Activated CD4-positive, alpha-beta T cell treated with anti-CD3 and anti-CD28 coated beads for 36 hours (primary cell): ENCODE measurements at regions of chr7 and their contacts with region 1.

Region 1: DNA sequence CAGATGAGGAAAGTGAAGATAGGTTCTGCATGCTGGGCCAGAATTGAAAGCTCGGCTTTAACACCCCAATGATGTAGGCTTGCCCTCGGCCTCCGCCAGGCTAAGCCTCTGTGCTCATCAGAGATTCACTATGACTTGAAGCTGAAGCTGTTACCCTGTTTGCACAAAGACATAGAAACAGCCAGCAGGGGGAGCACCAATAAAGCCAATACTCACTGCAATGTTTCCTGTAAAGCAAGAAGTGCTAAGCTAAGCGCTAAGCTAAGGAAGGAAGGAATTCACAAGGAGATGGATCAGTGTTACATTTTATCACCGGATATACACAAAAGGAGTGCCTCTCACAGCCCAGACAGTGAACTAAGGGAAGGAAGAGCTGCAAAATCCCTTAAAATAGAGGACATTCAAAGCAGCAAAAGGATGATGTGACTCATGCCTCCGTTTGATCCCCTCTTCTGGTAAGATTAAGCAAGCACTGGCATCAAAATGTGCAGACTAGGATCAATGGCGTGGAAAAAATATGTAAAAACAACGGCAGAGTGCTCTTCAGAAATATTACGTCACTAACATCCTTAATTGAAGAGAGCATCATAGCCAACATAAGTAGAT is 153.8 kb downstream of the COBL start:
- DNase-seq: peak; percentile 89
- ATAC-seq: peak; percentile 96
- H3K4me3 Mint-ChIP-seq: no peak overlapping the region
- H3K27ac Mint-ChIP-seq: no peak overlapping the region
- H3K4me1 Mint-ChIP-seq: peaks cover 9% of the 10 kb centered on the region
- H3K27me3 Mint-ChIP-seq: peaks cover 6% of the 10 kb centered on the region

Region 2: DNA sequence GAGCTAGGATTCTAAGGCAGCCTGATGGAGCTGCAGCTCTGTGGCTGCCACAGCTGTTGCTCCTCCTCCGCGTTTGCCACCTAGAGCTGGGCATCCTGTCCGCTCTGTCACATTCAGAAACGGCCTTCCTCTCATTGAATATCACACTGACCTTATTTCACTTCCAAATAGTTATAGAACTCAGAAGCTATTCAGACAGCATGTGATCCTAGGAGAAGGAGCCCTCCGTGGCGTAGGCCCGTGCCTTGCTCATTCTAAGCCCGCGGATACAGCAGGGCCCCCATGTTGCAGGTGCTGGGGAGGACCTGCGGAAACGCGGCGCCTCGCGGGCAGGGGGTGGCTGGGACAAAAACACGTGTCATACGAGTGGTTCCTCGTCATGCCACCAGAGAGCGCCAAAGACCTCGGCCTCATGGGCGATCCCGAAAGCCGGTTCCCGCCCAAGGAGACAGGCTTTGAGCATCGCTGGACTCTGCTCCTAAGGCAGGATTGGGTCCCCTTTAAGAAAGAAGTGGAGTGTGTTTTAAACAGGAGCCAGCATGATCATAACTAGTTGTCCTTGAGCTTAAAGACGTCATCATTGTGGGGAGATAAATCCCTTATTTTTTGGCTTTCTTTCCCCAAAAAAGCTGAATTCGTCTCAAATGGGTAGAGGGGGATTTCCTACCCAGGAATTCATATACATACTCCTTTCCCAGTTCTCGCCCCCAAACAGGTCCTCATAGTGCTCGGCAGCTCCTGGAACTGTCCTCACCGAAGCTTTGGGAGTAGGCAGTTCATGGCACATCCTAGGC is 694.8 kb before region 1 on chr7:
- CTCF ChIA-PET with region 1: interaction called, 30 read pairs
- POLR2A ChIA-PET with region 1: no interaction called
- intact Hi-C with region 1: loop called (anchors 1 kb)
- DNase-seq: peak; percentile 92
- ATAC-seq: peak; percentile 95
- H3K4me3 Mint-ChIP-seq: peak overlapping the region; percentile 11
- H3K27ac Mint-ChIP-seq: peak overlapping the region; percentile 59
- H3K4me1 Mint-ChIP-seq: peaks cover 13% of the 10 kb centered on the region
- H3K27me3 Mint-ChIP-seq: peaks cover 5% of the 10 kb centered on the region

Region 3: DNA sequence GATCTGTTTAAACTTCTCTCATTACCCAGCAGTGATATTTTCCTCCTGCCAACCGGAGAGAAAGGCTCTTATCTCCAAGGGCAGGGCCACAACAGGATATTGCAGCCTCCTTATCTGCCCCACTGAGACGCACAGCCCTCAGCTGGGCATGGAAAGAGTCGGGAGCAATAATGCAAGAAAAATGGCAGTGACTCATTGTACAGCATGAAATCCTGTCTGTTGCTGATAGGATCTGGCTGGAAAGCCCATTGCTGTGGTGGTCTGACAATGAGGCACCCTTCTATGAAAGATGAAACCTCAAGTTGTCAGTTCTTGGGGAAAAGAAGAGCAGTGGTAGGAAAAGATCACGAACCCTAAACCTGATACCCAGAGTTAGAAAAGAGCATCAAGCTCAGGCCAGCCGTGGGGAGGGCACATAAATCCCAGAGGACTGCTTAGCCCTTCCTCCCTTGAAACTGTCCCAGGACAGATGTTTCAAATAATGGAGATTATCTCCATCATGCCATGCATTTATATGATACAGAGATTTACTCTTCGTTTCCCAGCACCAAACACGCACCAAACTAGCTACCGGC is 665.7 kb before region 1 on chr7:
- CTCF ChIA-PET with region 1: no interaction called
- POLR2A ChIA-PET with region 1: no interaction called
- intact Hi-C with region 1: no loop called
- DNase-seq: no peak
- ATAC-seq: no peak
- H3K4me3 Mint-ChIP-seq: no peak overlapping the region
- H3K27ac Mint-ChIP-seq: no peak overlapping the region
- H3K4me1 Mint-ChIP-seq: peaks cover 2% of the 10 kb centered on the region
- H3K27me3 Mint-ChIP-seq: peaks cover 15% of the 10 kb centered on the region

Region 4: GRCh38 chr7:50696810-50697582 is 465.8 kb before region 1 on chr7:
- CTCF ChIA-PET with region 1: interaction called, 4 read pairs
- POLR2A ChIA-PET with region 1: no interaction called
- intact Hi-C with region 1: loop called in 1 of 2 experiments (anchors 5 kb)
- DNase-seq: peak; percentile 27
- ATAC-seq: peak; percentile 33
- H3K4me3 Mint-ChIP-seq: no peak overlapping the region
- H3K27ac Mint-ChIP-seq: no peak overlapping the region
- H3K4me1 Mint-ChIP-seq: peaks cover 13% of the 10 kb centered on the region
- H3K27me3 Mint-ChIP-seq: peaks cover 3% of the 10 kb centered on the region

Region 5: DNA sequence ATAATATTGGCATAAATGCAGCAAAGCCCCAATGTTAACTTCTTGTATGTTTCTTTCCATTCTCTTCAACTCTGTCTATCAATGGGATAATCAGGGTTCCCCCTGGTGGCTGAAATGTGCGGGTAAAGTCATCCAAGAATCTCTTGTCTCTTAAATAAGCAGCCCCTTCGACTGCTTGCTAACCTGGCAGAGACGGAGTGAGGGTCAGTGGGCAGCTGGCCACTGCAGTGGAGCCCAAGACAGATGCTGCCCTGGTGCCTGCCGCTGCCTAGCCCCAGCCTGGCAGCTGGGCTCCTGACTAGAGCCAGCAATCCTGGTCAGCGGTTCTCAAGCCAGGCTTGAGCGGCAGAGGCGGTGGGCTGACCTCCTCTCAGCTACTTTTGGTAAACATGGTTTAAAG is 95.1 kb before region 1 on chr7:
- CTCF ChIA-PET with region 1: interaction called, 11 read pairs
- POLR2A ChIA-PET with region 1: no interaction called
- intact Hi-C with region 1: loop called in 1 of 2 experiments (anchors 5 kb)
- DNase-seq: peak; percentile 72
- ATAC-seq: no peak
- H3K4me3 Mint-ChIP-seq: no peak overlapping the region
- H3K27ac Mint-ChIP-seq: no peak overlapping the region
- H3K4me1 Mint-ChIP-seq: no peaks in the 10 kb centered on the region
- H3K27me3 Mint-ChIP-seq: no peaks in the 10 kb centered on the region

Region 6: DNA sequence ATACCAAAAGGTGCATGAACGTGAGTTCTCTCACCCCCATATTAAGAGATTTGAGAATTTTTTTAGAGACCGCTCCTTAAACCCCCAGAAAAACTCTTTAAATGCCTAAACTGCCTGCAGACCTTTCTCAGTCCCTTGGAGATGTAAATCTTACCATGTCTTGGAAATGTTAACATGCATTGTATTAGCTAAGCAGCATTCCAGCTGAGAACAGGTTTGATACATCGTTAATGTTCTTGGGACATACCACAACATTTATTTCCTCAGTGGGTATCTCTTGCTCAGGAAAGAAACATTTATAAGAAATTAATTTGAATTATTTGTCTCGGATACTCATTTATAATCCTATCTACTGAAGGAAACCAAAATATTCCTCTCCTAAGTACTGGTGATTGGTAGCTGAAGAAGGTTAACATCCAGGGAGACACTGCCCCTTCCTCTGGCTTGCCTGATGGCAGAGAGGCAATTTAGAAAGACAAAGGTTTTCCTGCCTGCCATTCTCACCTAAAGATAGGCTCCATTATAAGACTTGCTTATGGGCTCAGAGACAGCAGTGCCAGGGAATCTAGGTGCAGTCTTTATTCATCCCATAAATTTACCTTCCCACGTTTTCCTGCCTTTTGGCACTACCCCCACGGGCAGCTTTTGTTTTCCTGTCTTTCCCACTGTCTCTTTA is 12.6 kb after region 1 on chr7:
- CTCF ChIA-PET with region 1: interaction called, 25 read pairs
- POLR2A ChIA-PET with region 1: no interaction called
- intact Hi-C with region 1: no loop called
- DNase-seq: no peak
- ATAC-seq: no peak
- H3K4me3 Mint-ChIP-seq: no peak overlapping the region
- H3K27ac Mint-ChIP-seq: no peak overlapping the region
- H3K4me1 Mint-ChIP-seq: no peaks in the 10 kb centered on the region
- H3K27me3 Mint-ChIP-seq: peaks cover 6% of the 10 kb centered on the region

Region 7: GRCh38 chr7:51366930-51367613 is 204.2 kb after region 1 on chr7:
- CTCF ChIA-PET with region 1: interaction called, 41 read pairs
- POLR2A ChIA-PET with region 1: no interaction called
- intact Hi-C with region 1: loop called (anchors 1 kb)
- DNase-seq: peak; percentile 14
- ATAC-seq: peak; percentile 69
- H3K4me3 Mint-ChIP-seq: no peak overlapping the region
- H3K27ac Mint-ChIP-seq: no peak overlapping the region
- H3K4me1 Mint-ChIP-seq: no peaks in the 10 kb centered on the region
- H3K27me3 Mint-ChIP-seq: peaks cover 2% of the 10 kb centered on the region